GM10248 (cell line): ENCODE measurements at regions of chr1 and their contacts with region 1.

Region 1: GRCh38 chr1:114282751-114283403 is 129.2 kb upstream of the SYT6 start:
- DNase-seq: peak; percentile 78
- CTCF ChIP-seq: peak; percentile 92

Region 2: DNA sequence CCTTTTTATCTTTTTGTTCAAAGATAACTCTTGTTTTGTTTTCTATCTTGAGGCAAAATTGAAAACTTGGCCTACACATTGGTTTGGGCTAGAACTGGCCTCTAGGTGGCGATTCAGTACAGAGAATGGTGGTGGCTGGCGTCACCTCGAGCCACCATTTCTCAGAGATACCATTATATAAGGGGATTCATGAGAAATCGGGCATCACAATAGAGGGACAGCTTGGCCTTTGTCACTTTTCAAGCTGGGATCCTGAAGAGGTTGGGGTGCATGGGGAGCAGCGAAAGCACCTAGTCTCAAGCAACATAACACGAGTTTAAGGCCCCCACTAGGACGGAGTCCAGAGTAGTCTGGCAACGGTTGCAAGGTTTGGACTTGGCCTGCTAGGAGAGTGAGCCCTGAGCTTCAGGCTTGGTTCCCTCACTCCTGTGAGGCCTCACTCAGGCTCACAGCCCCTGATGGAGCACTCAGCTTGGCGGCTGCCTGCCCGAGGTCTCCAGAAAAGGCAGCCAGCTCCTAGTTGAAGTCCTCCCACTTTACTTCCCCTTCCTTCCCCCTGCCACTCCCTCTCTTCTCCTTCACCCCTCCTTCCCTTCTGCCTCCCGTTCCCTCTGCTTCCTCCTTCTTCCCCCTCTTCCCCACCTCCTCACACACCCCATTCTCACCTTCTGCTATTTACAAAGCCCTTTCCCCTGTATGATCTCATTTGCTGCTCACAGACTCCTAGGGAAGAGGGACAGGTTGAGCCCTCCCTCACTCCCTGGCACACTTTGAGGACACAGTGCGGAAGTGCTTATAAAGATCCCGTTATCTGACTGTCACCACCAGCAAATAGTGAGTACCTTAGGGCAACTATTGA is 1142.1 kb before region 1 on chr1:
- CTCF ChIA-PET with region 1: interaction called, 22 read pairs
- POLR2A ChIA-PET with region 1: no interaction called
- DNase-seq: peak; percentile 71
- CTCF ChIP-seq: peak; percentile 81

Region 3: GRCh38 chr1:113978863-113979702 is 303.8 kb before region 1 on chr1 and contains the start of gene OLFML3:
- CTCF ChIA-PET with region 1: interaction called, 163 read pairs
- POLR2A ChIA-PET with region 1: interaction called, 3 read pairs
- DNase-seq: peak; percentile 69
- CTCF ChIP-seq: peak; percentile 84

Region 4: DNA sequence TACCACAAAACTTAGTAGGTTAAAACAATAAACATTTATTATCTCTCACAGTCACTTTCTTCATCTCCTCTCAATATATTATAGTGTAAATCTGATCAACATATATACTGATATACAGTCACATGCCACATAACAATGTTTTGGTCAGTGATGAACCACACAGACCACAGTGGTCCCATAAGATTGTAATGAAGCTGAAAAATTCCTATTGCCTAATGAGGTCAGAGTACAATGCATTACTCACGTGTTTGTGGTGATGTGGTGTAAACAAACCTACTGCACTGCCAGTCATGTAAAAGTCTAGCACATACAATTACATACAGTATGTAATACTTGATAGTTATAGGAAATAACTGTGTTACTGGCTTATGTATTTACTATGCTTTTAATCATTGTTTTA is 273.5 kb before region 1 on chr1:
- CTCF ChIA-PET with region 1: interaction called, 14 read pairs
- POLR2A ChIA-PET with region 1: no interaction called
- DNase-seq: no peak
- CTCF ChIP-seq: no peak

Region 5: DNA sequence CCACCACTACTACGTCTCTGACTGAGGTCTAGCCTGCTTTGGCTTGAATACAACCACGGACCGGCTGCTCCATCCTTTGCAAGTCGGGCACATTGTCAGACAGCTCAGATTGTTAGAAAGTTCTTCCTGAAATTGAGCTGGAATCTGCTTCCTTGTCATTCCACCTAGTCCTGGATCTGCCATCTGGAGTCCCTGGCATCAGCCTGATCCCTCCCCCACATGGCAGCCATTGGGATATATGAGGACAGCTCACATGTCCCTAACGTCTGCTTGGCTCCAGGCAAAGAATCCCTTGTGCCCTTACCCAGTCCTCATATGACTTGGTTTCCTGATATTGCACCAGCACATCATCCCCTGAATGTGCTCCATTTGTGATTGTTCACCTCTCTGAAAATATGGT is 72.9 kb before region 1 on chr1:
- CTCF ChIA-PET with region 1: no interaction called
- POLR2A ChIA-PET with region 1: no interaction called
- DNase-seq: no peak
- CTCF ChIP-seq: no peak

Region 6: GRCh38 chr1:114295321-114295720 is 12.4 kb after region 1 on chr1:
- CTCF ChIA-PET with region 1: interaction called, 10 read pairs
- POLR2A ChIA-PET with region 1: no interaction called
- DNase-seq: no peak
- CTCF ChIP-seq: no peak

Region 7: GRCh38 chr1:114369927-114370326 is 87.0 kb after region 1 on chr1:
- CTCF ChIA-PET with region 1: no interaction called
- POLR2A ChIA-PET with region 1: no interaction called
- DNase-seq: no peak
- CTCF ChIP-seq: no peak